Dorsolateral prefrontal cortex (tissue), 120 donors: ENCODE measurements at regions of chr15 and their contacts with region 1.

Region 1: GRCh38 chr15:74407055-74407691 is 26.6 kb downstream of the SEMA7A start:
- DNase-seq: peak in 8 of 10 donors; percentile 43 to 84 (median 72)
- H3K4me3 ChIP-seq: no peak overlapping the region
- H3K27ac ChIP-seq: peak overlapping the region in 58 of 59 donors; percentile 38 to 87 (median 79)
- H3K27me3 ChIP-seq: no peaks in the 10 kb centered on the region
- CTCF ChIP-seq: no peak

Region 2: GRCh38 chr15:74202452-74203428 is 204.4 kb before region 1 on chr15 and contains the start of gene STRA6:
- intact Hi-C with region 1: no loop called
- DNase-seq: no peak
- H3K4me3 ChIP-seq: no peak within 1 kb of the TSS
- H3K27ac ChIP-seq: peak within 1 kb of the TSS in 4 of 59 donors; percentile 18 to 51 (median 28)
- H3K27me3 ChIP-seq: no peaks in the 10 kb centered on the region
- CTCF ChIP-seq: no peak
- total RNA-seq, gene STRA6: 0.19 to 3.2 (median 0.83) TPM in 80 of 120 experiments, not detected in the others

Region 3: DNA sequence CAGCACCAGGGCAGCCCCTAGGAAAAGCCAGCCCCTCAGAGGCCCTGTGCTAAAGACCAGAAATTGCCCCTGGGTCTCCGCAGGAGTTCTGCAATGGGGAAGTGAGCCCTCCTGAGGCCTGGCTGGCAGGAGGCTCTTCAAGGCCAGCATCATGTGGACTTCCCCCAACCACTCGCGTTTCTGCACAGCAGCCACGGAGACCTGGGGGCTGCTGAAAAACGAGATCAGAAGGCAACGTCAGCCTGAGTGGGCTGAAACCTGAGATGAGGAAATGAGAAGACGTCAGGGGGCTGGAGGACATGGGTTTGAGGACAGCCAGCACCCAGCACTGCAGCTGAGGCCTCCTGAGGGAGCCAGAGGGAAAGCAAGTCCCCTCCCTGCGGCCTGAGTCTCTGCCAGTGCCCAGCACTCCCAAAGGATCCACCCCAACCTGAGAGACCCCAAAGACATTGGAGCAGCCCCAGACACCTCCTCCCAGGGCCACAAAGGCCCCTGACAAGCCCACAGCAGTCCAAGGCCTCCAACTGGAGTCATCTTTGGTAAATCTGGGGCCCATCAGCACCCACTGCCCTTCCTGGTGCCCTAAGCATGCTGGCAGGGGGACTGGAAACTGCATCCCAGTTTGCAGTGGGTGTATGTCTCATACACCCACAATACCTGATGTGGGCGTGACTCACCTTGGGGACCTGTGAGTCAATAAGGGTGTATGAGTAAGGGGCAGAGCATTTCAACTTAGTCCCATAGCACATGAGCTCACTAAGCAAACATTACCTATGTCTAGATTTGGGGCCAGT is 10.5 kb before region 1 on chr15:
- intact Hi-C with region 1: loop called in 1 of 2 experiments (anchors 1 kb)
- DNase-seq: no peak
- H3K4me3 ChIP-seq: no peak overlapping the region
- H3K27ac ChIP-seq: peak overlapping the region in 3 of 59 donors; percentile 18 to 38 (median 25)
- H3K27me3 ChIP-seq: no peaks in the 10 kb centered on the region
- CTCF ChIP-seq: no peak